Motor neuron (in vitro differentiated cells): ENCODE measurements at regions of chr15 and their contacts with region 1.

Region 1: GRCh38 chr15:99704444-99704838 is 28.8 kb downstream of the LYSMD4 start:
- ATAC-seq: peak; percentile 18 to 88 (median 85)
- H3K4me3 ChIP-seq: no peak overlapping the region
- H3K27ac ChIP-seq: no peak overlapping the region
- H3K4me1 ChIP-seq: peaks cover 3 to 17% of the 10 kb centered on the region in 2 donors

Region 2: DNA sequence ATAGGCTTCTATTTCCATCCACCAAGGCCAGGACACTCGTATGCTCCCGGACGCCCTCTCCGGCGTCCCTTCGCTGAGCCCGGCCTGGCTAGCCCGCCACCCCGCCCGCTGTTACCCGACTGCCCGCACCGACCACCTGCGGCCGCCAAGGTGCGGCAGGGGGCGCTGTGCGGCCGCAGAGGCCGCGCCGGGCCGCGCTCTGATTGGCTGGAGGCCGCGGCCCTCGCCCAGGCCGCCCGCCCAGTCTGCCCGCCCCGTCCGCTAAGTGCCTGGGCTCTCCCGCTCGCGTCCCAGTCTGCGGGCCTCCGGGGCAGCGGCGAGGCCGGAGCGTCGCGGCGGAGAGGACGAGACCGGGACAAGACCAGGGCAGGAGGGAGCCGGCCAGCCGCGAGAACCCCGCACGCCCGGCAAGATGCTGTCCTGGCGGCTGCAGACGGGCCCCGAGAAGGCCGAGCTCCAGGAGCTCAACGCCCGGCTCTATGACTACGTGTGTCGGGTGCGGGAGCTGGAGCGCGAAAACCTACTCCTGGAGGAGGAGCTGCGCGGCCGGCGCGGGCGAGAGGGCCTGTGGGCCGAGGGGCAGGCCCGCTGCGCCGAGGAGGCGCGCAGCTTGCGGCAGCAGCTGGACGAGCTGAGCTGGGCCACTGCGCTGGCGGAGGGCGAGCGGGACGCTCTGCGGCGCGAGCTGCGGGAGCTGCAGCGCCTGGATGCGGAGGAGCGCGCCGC is 599.5 kb before region 1 on chr15 and contains the start of gene SYNM:
- in situ Hi-C with region 1: loop called in 1 of 9 experiments (anchors 25 kb)
- ATAC-seq: peak; percentile 72 to 85 (median 82)
- H3K4me3 ChIP-seq: peak within 1 kb of the TSS; percentile 39 to 53 (median 46)
- H3K27ac ChIP-seq: peak within 1 kb of the TSS; percentile 32 to 38
- H3K4me1 ChIP-seq: peaks cover 0 to 7% of the 10 kb centered on the region in 2 donors
- total RNA-seq, gene SYNM: 5.5 to 92.8 (median 24.7) TPM

Region 3: DNA sequence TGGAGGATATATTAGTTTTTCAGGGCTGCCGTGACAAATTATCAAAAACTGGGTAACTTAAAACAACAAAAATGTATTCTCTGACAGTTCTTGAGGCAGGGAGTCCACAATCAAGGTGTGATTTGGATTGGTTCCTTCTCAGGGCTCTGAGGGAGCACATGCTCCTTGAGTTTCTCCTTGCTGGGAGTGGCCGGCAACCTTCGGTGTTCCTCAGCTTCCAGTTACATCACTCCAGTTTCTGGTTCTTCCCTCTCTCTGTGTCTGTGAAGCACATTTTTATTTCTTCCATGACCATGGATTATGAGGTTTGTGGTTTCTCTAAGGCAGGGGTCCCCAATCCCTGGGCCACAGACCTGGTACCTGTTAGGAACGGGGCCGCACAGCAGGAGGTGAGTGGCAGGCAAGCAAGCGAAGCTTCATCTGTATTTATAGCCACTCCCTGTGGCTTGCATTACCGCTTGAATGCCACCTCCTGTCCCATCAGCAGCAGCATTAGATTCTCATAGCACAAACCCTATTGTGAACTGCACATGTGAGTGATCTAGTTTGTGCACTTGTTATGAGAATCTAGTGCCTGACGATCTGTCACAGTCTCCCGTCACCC is 428.8 kb before region 1 on chr15:
- in situ Hi-C with region 1: loop called in 4 of 9 experiments (anchors 25 kb)
- ATAC-seq: no peak
- H3K4me3 ChIP-seq: no peak overlapping the region
- H3K27ac ChIP-seq: no peak overlapping the region
- H3K4me1 ChIP-seq: no peaks in the 10 kb centered on the region

Region 4: GRCh38 chr15:99409097-99409473 is 295.4 kb before region 1 on chr15:
- in situ Hi-C with region 1: loop called in 1 of 9 experiments (anchors 25 kb)
- ATAC-seq: peak; percentile 55 to 93 (median 76)
- H3K4me3 ChIP-seq: no peak overlapping the region
- H3K27ac ChIP-seq: no peak overlapping the region
- H3K4me1 ChIP-seq: no peaks in the 10 kb centered on the region